ENCODE measurements at regions of chr4 and their contacts with region 1.

Region 1: GRCh38 chr4:107824353-107825071 is at the start of gene SGMS2:
- DNase-seq: peak; percentile 76 to 96
- H3K4me3 ChIP-seq: peak within 1 kb of the TSS; percentile 77 to 94
- H3K27ac ChIP-seq: peak within 1 kb of the TSS; percentile 96 to 98
- H3K4me1 ChIP-seq: peaks cover 2 to 3% of the 10 kb centered on the region in 2 donors
- H3K27me3 ChIP-seq: no peaks in the 10 kb centered on the region
- CTCF ChIP-seq: no peak
- total RNA-seq, gene SGMS2: 333 TPM

Region 2: DNA sequence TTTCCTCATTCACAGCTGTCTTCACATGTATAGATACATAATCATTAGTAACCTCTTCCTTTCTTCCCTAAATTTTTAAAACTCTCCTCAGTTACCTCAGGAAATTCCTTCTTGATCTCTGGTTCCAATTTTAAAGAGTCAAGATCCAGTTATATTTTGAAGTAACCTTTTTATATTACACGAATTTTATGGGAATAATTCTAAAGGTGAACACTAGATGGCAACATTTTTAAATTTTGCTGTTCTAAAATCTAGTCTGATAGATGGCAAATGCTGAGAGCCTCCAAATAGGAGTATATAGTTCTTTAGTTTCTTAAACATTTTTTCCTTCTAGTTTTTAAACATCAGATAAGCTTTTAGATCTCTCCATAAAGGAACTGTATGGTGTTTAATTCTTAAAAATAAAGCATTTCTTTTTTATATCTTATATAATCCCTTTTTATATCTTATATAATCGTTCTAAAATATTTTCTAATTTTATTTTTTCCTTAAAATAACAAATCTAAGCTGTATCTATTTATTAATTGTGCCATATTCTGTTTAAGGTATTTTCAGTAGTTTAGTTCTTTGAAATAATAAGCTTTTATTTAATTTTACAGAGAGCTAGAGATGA is 66.5 kb before region 1 on chr4:
- intact Hi-C with region 1: loop called (anchors 5 kb)
- DNase-seq: no peak
- H3K4me3 ChIP-seq: no peak overlapping the region
- H3K27ac ChIP-seq: no peak overlapping the region
- H3K4me1 ChIP-seq: no peaks in the 10 kb centered on the region
- H3K27me3 ChIP-seq: no peaks in the 10 kb centered on the region
- CTCF ChIP-seq: peak; percentile 13 to 66 (median 65)

Region 3: DNA sequence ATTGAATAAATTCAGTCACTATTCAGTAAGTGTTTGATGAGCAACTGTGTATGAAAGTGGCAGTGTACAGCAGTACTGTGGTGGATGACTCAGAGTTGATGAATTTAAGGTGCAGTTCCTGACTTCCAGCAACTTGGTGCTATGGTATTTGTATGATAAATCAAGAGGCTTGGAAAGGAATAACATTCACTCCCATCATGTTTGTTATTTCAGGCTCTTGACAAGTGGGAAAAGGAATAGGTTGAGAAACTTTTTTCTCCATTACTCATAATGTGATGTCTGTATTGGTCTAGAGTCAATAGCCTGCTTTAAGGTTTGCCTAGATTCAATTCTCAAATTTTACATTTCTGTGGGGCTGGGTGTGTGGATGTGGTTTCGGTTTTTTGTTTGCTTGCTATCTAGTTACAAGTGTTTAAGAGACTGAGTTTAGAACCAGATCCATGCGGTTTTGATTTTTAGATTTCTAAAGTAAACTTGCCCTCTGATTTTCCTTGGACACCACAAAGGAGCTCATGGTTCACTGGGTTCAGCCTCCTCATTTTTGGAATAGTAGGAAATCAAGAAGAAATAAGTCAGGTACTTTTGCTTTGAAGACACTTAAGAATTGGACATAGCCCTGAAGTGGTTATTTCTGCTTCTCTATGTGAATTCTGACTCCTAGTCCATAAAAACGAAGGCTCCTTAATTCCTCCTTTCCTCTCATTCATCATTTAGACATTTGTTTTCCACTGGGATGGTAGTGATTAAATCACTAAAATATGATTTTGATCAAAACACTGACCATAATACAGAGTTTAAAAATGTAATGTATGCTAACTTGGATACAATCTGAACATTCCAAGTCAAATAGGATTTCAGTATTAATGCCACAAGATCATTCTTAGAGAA is 71.9 kb after region 1 on chr4:
- intact Hi-C with region 1: loop called (anchors 1 kb)
- DNase-seq: no peak
- H3K4me3 ChIP-seq: peak overlapping the region in 1 of 2 donors; percentile 36
- H3K27ac ChIP-seq: peak overlapping the region; percentile 48 to 68
- H3K4me1 ChIP-seq: peaks cover 0 to 15% of the 10 kb centered on the region in 2 donors
- H3K27me3 ChIP-seq: no peaks in the 10 kb centered on the region
- CTCF ChIP-seq: no peak

Region 4: DNA sequence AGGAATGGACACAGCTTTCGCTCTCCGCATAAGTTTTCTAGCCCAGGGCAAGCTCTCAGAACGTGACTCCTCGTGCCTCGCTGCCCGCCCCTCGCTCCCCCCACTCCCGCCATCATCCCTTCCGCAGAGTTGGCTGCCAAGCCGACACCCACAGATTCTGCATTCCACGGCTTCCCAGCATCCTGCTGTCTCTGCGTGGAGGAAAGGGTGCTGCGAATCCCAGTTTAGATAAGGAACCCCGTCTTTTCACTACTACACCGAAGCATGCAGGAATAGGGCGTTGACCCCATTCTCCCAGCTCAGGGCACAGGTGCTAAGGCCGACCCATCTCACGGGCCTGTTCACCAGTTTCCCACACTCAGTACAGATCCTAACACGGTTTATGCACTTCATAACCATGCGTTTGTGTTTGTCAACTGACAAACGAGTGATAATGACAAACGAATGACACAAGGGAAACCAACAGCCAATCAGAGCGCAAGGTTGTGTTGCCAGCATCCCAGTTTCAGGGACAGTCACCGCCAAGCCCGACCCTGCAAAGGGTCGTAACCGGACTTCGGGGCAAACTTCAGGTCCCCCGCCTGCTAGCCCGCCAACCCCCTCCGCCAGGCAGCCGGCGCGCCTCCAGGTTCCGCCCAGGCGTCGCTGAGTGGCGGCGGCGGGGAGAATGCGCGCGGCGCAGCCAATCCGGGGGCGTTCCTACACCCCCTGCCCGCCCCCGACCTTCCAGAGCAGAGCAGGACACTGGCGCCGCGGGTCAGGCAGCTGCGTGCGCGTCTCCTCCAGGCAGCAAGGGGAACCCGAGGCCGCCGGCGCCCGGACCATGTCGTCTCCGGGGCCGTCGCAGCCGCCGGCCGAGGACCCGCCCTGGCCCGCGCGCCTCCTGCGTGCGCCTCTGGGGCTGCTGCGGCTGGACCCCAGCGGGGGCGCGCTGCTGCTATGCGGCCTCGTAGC is 106.6 kb after region 1 on chr4 and contains the start of gene CYP2U1:
- intact Hi-C with region 1: loop called (anchors 1 kb)
- DNase-seq: peak; percentile 66 to 94
- H3K4me3 ChIP-seq: peak within 1 kb of the TSS; percentile 72 to 85
- H3K27ac ChIP-seq: peak within 1 kb of the TSS; percentile 74 to 77
- H3K4me1 ChIP-seq: peaks cover 0 to 12% of the 10 kb centered on the region in 2 donors
- H3K27me3 ChIP-seq: no peaks in the 10 kb centered on the region
- CTCF ChIP-seq: peak; percentile 15 to 25 (median 17)
- total RNA-seq, gene CYP2U1: 23.8 TPM

Region 5: GRCh38 chr4:108172753-108173598 is 348.5 kb after region 1 on chr4:
- intact Hi-C with region 1: loop called (anchors 10 kb)
- DNase-seq: peak in 1 of 2 donors; percentile 70
- H3K4me3 ChIP-seq: peak overlapping the region; percentile 49 to 68
- H3K27ac ChIP-seq: peak overlapping the region in 1 of 2 donors; percentile 27
- H3K4me1 ChIP-seq: peaks cover 7 to 10% of the 10 kb centered on the region in 2 donors
- H3K27me3 ChIP-seq: peaks cover 14% of the 10 kb centered on the region
- CTCF ChIP-seq: no peak

Measured in ascending aorta (tissue), 2 donors.